CD4-positive, alpha-beta memory T cell (primary cell): ENCODE measurements at regions of chr14 and their contacts with region 1.

Region 1: DNA sequence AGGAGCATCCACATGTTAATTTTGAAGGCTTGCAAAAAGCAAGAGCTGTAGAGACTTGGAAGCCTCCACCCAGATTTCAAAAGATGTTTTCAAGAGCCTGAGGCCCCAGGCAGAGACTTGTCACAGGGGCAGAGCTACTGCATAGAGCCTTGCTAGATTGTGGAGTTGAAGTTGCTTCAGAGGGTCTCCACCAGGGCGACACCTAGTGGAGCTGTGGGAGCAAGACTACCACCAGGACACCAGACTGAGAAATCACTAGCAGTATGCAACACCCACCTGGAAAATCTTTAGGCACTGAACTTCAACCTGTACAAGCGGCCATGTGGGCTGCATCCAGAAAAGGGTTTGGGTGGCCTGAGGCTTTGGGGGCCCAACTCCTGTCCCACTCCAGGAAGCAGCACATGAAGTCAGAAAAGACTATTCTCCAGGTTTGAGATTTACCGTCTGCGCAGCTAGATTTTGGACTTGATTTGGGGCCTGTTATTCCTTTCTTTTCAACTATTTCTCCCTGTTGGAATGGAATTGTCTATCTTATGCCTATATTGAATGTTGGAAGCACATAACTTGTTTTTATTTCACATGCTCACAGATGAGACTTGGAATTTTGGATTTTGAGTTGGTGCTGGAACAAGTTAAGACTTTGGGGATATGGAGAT is 508.6 kb downstream of the FLRT2 start:
- DNase-seq: peak; percentile 3 to 34 (median 17)
- H3K4me3 ChIP-seq: no peak overlapping the region
- H3K4me3 Mint-ChIP-seq: no peak overlapping the region
- H3K27ac ChIP-seq: no peak overlapping the region
- H3K27ac Mint-ChIP-seq: no peak overlapping the region
- H3K4me1 ChIP-seq: no peaks in the 10 kb centered on the region
- H3K4me1 Mint-ChIP-seq: peaks cover 0 to 4% (median 0%) of the 10 kb centered on the region in 4 donors
- H3K27me3 ChIP-seq: no peaks in the 10 kb centered on the region
- H3K27me3 Mint-ChIP-seq: no peaks in the 10 kb centered on the region

Region 2: DNA sequence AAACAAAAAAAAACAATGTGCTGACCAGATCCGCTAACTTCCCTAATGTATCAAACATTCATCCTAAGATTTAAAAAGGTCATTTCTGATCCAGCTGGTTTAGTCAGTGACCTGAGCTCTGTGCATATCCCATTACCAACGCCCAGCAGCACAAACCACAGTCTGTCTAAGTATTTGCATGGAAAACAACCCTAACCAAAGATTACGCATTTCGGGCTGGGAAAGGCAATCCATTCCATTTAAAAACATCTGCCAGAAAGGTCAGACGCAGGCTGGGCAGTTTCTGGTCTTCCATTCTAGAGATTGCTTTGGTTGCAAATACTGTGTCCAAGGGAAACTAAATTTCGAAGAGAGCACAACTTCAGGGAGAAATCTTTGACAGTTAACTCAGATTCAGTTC is 273.7 kb before region 1 on chr14:
- CTCF ChIA-PET with region 1: no interaction called
- POLR2A ChIA-PET with region 1: no interaction called
- intact Hi-C with region 1: no loop called
- DNase-seq: no peak
- H3K4me3 ChIP-seq: no peak overlapping the region
- H3K4me3 Mint-ChIP-seq: no peak overlapping the region
- H3K27ac ChIP-seq: no peak overlapping the region
- H3K27ac Mint-ChIP-seq: no peak overlapping the region
- H3K4me1 ChIP-seq: no peaks in the 10 kb centered on the region
- H3K4me1 Mint-ChIP-seq: no peaks in the 10 kb centered on the region
- H3K27me3 ChIP-seq: no peaks in the 10 kb centered on the region
- H3K27me3 Mint-ChIP-seq: no peaks in the 10 kb centered on the region

Region 3: GRCh38 chr14:85921241-85921640 is 117.3 kb before region 1 on chr14:
- CTCF ChIA-PET with region 1: no interaction called
- POLR2A ChIA-PET with region 1: no interaction called
- intact Hi-C with region 1: no loop called
- DNase-seq: no peak
- H3K4me3 ChIP-seq: no peak overlapping the region
- H3K4me3 Mint-ChIP-seq: no peak overlapping the region
- H3K27ac ChIP-seq: no peak overlapping the region
- H3K27ac Mint-ChIP-seq: no peak overlapping the region
- H3K4me1 ChIP-seq: no peaks in the 10 kb centered on the region
- H3K4me1 Mint-ChIP-seq: no peaks in the 10 kb centered on the region
- H3K27me3 ChIP-seq: no peaks in the 10 kb centered on the region
- H3K27me3 Mint-ChIP-seq: peaks cover 4 to 8% of the 10 kb centered on the region in 2 donors

Region 4: GRCh38 chr14:85934123-85934885 is 104.2 kb before region 1 on chr14:
- CTCF ChIA-PET with region 1: no interaction called
- POLR2A ChIA-PET with region 1: no interaction called
- intact Hi-C with region 1: loop called (anchors 5 kb)
- DNase-seq: peak; percentile 76 to 82 (median 80)
- H3K4me3 ChIP-seq: peak overlapping the region; percentile 82 to 96
- H3K4me3 Mint-ChIP-seq: peak overlapping the region; percentile 86 to 97 (median 92)
- H3K27ac ChIP-seq: peak overlapping the region; percentile 67
- H3K27ac Mint-ChIP-seq: peak overlapping the region; percentile 90 to 97 (median 96)
- H3K4me1 ChIP-seq: peaks cover 21% of the 10 kb centered on the region
- H3K4me1 Mint-ChIP-seq: peaks cover 21 to 39% (median 30%) of the 10 kb centered on the region in 4 donors
- H3K27me3 ChIP-seq: no peaks in the 10 kb centered on the region
- H3K27me3 Mint-ChIP-seq: no peaks in the 10 kb centered on the region

Region 5: GRCh38 chr14:86057018-86057667 is 18.6 kb after region 1 on chr14:
- CTCF ChIA-PET with region 1: interaction called, 10 read pairs
- POLR2A ChIA-PET with region 1: no interaction called
- intact Hi-C with region 1: no loop called
- DNase-seq: peak in 3 of 5 donors; percentile 16 to 26 (median 20)
- H3K4me3 ChIP-seq: no peak overlapping the region
- H3K4me3 Mint-ChIP-seq: no peak overlapping the region
- H3K27ac ChIP-seq: no peak overlapping the region
- H3K27ac Mint-ChIP-seq: no peak overlapping the region
- H3K4me1 ChIP-seq: no peaks in the 10 kb centered on the region
- H3K4me1 Mint-ChIP-seq: peaks cover 0 to 12% (median 4%) of the 10 kb centered on the region in 4 donors
- H3K27me3 ChIP-seq: no peaks in the 10 kb centered on the region
- H3K27me3 Mint-ChIP-seq: no peaks in the 10 kb centered on the region

Region 6: GRCh38 chr14:86072116-86072894 is 33.8 kb after region 1 on chr14:
- CTCF ChIA-PET with region 1: no interaction called
- POLR2A ChIA-PET with region 1: no interaction called
- intact Hi-C with region 1: no loop called
- DNase-seq: no peak
- H3K4me3 ChIP-seq: no peak overlapping the region
- H3K4me3 Mint-ChIP-seq: no peak overlapping the region
- H3K27ac ChIP-seq: no peak overlapping the region
- H3K27ac Mint-ChIP-seq: peak overlapping the region in 3 of 7 donors; percentile 19 to 72 (median 42)
- H3K4me1 ChIP-seq: no peaks in the 10 kb centered on the region
- H3K4me1 Mint-ChIP-seq: peaks cover 12 to 13% (median 12%) of the 10 kb centered on the region in 4 donors
- H3K27me3 ChIP-seq: no peaks in the 10 kb centered on the region
- H3K27me3 Mint-ChIP-seq: no peaks in the 10 kb centered on the region